ENCODE measurements at regions of chr16 and their contacts with region 1.

Region 1: GRCh38 chr16:84738255-84739038 is 38.6 kb downstream of the USP10 start:
- DNase-seq: no peak
- H3K4me3 ChIP-seq: no peak overlapping the region
- CTCF ChIP-seq: peak; percentile 82

Region 2: GRCh38 chr16:84518748-84519341 is 219.6 kb before region 1 on chr16:
- CTCF ChIA-PET with region 1: interaction called, 17 read pairs
- POLR2A ChIA-PET with region 1: no interaction called
- DNase-seq: no peak
- H3K4me3 ChIP-seq: no peak overlapping the region
- CTCF ChIP-seq: no peak

Region 3: GRCh38 chr16:84597528-84597896 is 140.9 kb before region 1 on chr16:
- CTCF ChIA-PET with region 1: no interaction called
- POLR2A ChIA-PET with region 1: no interaction called
- DNase-seq: no peak
- H3K4me3 ChIP-seq: no peak overlapping the region
- CTCF ChIP-seq: no peak

Region 4: GRCh38 chr16:84647828-84648594 is 90.4 kb before region 1 on chr16 and contains the start of gene KLHL36:
- CTCF ChIA-PET with region 1: interaction called, 19 read pairs
- POLR2A ChIA-PET with region 1: no interaction called
- DNase-seq: no peak
- H3K4me3 ChIP-seq: peak within 1 kb of the TSS; percentile 68
- CTCF ChIP-seq: no peak

Region 5: DNA sequence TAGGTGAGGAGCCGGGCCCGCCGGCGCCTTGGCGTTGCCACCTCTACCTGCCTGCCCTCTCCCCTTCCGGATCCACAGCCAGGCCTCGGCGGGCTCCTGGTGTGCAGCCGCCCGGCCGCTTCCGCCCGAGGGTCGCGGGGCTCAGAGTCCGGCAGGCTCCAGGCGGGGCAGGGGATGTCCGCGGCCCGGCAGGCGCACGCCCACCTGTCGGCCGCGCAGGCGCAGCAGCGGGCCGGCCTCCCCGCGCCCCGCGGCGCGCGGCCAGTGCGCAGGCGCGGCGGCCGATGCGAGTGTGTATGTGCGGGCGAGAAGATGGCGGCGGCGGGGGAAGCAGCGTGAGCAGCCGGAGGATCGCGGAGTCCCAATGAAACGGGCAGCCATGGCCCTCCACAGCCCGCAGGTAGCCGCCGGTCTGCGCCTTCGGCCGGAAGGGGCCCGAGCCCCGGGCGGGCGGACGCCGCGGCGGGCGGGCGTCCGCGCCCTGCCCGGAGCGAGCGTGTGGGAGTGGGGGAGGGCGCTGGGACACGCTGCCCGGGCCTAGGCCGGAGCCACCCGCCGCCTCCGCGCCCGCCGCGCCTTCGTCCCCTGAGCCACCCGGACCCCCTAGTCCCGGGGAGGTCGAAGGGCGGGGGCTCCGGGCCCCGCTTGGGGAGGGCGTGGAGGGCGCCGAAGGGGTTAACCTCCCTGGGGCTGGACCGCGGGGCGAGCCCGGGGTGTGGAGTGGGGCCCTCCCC is 38.6 kb before region 1 on chr16 and contains the start of gene USP10:
- CTCF ChIA-PET with region 1: interaction called, 16 read pairs
- POLR2A ChIA-PET with region 1: no interaction called
- DNase-seq: no peak
- H3K4me3 ChIP-seq: peak within 1 kb of the TSS; percentile 77
- CTCF ChIP-seq: no peak

Region 6: DNA sequence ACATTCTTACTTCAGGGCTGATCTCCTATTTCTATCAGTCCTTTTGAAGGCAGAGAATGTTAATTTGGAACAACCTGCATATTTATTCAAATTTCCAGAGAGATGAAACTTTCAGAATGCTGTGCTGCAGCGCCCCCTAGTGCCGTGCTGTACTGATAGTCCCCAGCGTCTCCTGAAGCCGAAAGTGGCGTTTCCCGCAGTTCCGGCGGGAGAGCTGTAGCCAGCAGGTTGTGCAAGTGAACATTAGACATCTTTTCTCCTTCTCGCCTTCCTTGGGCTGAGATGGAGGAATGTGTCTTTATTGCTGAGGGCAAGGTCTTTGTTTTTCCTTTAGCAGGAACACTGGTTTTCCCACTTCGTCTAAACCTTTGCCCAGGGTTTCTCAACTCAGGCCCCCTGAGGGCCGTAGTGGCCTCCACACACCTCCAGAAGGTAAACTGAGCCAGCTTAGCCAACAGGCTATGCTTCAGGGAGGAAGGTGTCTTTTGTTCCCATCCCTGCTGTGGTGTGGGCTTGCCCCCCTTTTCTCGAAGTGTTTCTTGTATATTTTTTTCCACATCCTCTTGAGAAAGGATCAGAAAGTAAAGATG is 12.3 kb before region 1 on chr16:
- CTCF ChIA-PET with region 1: interaction called, 102 read pairs
- POLR2A ChIA-PET with region 1: interaction called, 3 read pairs
- DNase-seq: no peak
- H3K4me3 ChIP-seq: no peak overlapping the region
- CTCF ChIP-seq: peak; percentile 88

Region 7: DNA sequence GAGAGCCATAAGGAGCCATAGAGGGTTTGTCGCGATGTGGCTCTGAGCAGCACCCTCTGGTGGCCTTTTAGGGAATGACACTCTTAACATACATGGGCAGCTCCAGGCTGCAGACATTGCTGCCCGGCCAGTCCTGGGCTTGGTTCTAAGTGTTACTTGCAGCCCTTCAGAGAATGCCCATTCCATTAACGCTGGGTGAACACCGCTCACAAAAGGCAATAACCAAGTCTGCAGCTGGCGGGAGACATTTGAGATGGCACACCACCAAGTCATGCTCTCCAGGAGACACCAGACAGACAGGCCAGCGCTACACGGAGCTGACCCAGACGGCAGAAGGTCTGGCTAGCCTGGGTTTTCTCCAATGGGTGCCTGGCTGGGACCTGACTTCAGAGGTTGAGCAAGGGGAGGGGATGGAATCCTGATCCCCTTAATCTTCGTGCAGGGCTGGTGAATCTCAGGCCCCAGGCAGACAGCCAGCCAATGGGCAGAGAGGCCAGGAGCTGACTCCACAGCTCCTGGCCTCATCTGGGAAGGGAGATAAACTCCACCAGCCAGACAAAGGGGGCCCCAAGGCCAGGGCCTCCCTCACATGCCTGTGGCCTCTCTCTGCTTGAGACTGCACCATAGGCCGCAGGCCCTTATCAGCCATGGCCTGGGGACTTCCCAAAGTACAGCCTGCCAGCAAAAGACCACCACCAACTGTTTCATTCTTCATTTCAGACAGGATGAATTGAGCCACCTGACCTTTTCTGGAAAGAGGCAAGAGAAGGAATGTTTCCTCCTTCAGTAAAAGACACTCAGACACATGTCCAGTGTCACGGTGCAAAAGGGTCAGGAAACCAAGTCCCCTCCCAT is 214.1 kb after region 1 on chr16:
- CTCF ChIA-PET with region 1: interaction called, 28 read pairs
- POLR2A ChIA-PET with region 1: no interaction called
- DNase-seq: no peak
- H3K4me3 ChIP-seq: no peak overlapping the region
- CTCF ChIP-seq: peak; percentile 86

Measured in AG04449 (cell line).